ENCODE measurements at regions of chr14 and their contacts with region 1.

Region 1: DNA sequence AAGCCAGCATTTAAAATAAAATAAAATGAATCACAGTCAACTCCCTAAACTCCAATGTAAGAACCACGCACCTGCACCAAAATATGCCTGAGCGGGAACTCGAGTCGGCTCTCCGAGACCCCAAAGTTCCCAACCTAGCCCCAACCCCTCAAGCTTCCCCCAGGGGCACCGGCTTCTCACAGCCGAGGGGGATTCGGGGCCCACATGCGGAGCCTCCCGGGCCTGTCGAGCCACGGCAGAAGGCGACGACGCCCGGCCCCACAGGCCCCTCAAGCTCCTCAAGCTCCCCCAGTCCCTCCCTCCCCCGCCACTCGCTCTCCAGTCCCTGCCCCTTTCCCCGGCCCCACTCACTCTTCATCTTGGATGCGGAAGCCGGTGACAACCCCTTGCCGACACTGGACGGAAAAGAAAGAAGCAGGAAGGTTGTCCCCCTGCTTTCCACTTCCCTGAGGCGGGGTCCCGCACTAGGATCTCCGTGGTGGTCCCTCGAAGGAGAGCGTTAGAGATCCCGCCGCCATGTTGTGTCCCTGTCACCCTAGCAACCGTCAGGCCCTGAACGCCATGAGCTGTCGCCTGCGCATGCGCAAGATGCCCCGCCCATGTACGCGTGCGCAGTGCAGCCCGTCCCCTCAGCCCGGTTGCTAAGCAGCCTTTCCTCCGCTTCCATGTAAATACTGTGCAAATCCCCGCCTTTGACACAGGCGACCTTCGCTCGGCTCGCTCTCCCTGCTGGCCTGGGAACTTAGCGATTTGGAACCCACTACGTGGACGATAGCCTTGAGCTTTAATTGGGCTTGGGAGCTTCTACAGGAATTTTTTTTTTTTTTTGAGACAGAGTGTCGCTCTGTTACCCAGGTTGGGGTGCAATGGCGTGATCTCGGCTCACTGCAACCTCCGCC is at the start of gene MOK:
- DNase-seq: peak; percentile 93 to 99 (median 96)
- ATAC-seq: peak; percentile 91
- H3K4me3 ChIP-seq: peak within 1 kb of the TSS; percentile 81
- H3K4me3 Mint-ChIP-seq: peak within 1 kb of the TSS; percentile 95
- H3K27ac ChIP-seq: peak within 1 kb of the TSS; percentile 57 to 77
- H3K27ac Mint-ChIP-seq: peak within 1 kb of the TSS; percentile 91
- H3K4me1 ChIP-seq: peaks cover 12% of the 10 kb centered on the region
- H3K4me1 Mint-ChIP-seq: peaks cover 6% of the 10 kb centered on the region
- H3K27me3 ChIP-seq: no peaks in the 10 kb centered on the region
- H3K27me3 Mint-ChIP-seq: peaks cover 5% of the 10 kb centered on the region
- CTCF ChIP-seq: no peak
- total RNA-seq, gene MOK: 2.3 to 2.5 TPM

Region 2: DNA sequence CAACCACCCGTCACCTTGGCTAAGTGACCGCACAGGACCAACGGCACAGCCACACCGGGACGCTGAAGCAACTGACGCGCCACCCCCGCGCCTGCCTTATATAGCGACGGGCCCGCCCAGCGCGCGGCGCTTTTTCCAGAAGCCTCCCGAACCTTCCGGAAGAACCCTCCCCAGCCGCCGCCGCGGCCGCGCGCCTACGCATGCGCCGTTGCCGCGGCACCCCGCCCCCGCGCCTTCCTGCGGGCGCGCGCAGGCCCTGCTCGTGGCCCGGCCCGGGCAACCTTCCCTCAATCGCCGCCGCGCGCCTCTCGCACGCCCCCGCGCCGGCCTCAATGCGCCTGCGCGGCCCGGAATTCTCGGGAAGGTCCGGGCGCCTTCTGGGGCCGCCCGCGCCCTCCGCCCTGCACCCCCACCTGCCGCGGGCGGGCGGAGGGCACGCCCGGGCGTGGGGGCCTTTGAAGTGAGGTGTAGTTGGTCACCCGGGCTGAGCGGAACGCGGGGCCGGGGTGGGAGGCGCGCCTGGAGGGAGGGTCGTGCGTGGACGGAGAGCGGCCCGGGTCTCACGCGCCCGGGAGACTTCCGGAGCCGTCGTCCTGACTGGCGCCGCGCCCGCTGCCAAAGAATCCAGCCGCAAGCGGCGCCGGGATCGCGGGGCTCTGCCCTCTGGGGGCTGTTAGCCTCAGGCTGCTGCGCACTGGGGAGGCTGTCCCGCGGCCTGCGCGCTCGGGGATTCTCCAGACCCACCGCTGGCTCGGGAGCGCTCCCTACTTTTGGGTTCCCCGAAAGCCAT is 217.7 kb before region 1 on chr14 and contains the start of gene HSP90AA1:
- CTCF ChIA-PET with region 1: no interaction called
- POLR2A ChIA-PET with region 1: no interaction called
- intact Hi-C with region 1: loop called in 1 of 2 experiments (anchors 2 kb)
- DNase-seq: peak; percentile 88 to 98 (median 94)
- ATAC-seq: peak; percentile 77
- H3K4me3 ChIP-seq: peak within 1 kb of the TSS; percentile 74
- H3K4me3 Mint-ChIP-seq: peak within 1 kb of the TSS; percentile 98
- H3K27ac ChIP-seq: peak within 1 kb of the TSS; percentile 95 to 98
- H3K27ac Mint-ChIP-seq: peak within 1 kb of the TSS; percentile 91
- H3K4me1 ChIP-seq: peaks cover 51% of the 10 kb centered on the region
- H3K4me1 Mint-ChIP-seq: peaks cover 64% of the 10 kb centered on the region
- H3K27me3 ChIP-seq: no peaks in the 10 kb centered on the region
- H3K27me3 Mint-ChIP-seq: no peaks in the 10 kb centered on the region
- CTCF ChIP-seq: no peak
- total RNA-seq, gene HSP90AA1: 451 to 462 TPM

Region 3: DNA sequence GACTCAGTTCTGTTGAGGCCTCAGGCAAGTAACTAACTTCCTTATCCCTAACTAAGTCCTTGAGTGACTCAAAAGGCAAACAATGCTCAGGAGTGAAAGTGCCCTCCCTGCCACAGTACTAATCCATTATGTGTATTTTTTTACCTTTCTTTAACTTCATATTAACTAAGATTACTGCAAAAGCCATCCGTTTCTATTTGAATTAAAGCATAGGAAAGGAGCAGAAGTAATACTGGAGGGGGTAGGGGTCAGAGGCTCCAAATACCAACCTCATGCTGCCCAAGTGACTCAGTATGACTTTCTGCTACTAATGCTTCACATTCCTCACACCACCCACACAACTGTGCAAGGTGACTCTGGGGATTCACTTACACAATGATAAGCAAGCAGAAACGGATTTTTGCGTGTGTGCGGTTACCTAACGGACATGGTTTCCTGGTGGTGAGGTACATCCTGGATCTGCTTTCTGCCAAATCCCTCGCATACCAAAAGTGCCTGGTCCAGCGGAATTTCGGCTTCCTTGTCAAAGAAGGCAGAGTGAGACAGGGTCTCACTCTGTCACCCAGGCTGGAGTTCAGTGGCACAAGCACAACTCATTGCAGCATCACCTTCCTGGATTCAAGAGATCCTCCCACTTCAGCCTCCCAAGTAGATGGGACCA is 25.0 kb before region 1 on chr14:
- CTCF ChIA-PET with region 1: no interaction called
- POLR2A ChIA-PET with region 1: no interaction called
- intact Hi-C with region 1: no loop called
- DNase-seq: no peak
- ATAC-seq: no peak
- H3K4me3 ChIP-seq: no peak overlapping the region
- H3K4me3 Mint-ChIP-seq: no peak overlapping the region
- H3K27ac ChIP-seq: no peak overlapping the region
- H3K27ac Mint-ChIP-seq: no peak overlapping the region
- H3K4me1 ChIP-seq: no peaks in the 10 kb centered on the region
- H3K4me1 Mint-ChIP-seq: no peaks in the 10 kb centered on the region
- H3K27me3 ChIP-seq: no peaks in the 10 kb centered on the region
- H3K27me3 Mint-ChIP-seq: no peaks in the 10 kb centered on the region
- CTCF ChIP-seq: no peak

Region 4: GRCh38 chr14:102362545-102363181 is 57.8 kb after region 1 on chr14 and contains the starts of genes CINP and TECPR2:
- CTCF ChIA-PET with region 1: no interaction called
- POLR2A ChIA-PET with region 1: no interaction called
- intact Hi-C with region 1: loop called in 1 of 2 experiments (anchors 2 kb)
- DNase-seq: peak; percentile 92 to 99 (median 96)
- ATAC-seq: peak; percentile 90
- H3K4me3 ChIP-seq: peak within 1 kb of the TSS; percentile 91
- H3K4me3 Mint-ChIP-seq: peak within 1 kb of the TSS; percentile 94
- H3K27ac ChIP-seq: peak within 1 kb of the TSS; percentile 74 to 89
- H3K27ac Mint-ChIP-seq: no peak within 1 kb of the TSS
- H3K4me1 ChIP-seq: peaks cover 27% of the 10 kb centered on the region
- H3K4me1 Mint-ChIP-seq: peaks cover 21% of the 10 kb centered on the region
- H3K27me3 ChIP-seq: no peaks in the 10 kb centered on the region
- H3K27me3 Mint-ChIP-seq: no peaks in the 10 kb centered on the region
- CTCF ChIP-seq: no peak
- total RNA-seq, gene CINP: 12.6 to 14.5 TPM
- total RNA-seq, gene TECPR2: 5.0 to 5.4 TPM

Measured in CD4-positive, alpha-beta T cell (primary cell).